ENCODE measurements at regions of chr7 and their contacts with region 1.

Region 1: DNA sequence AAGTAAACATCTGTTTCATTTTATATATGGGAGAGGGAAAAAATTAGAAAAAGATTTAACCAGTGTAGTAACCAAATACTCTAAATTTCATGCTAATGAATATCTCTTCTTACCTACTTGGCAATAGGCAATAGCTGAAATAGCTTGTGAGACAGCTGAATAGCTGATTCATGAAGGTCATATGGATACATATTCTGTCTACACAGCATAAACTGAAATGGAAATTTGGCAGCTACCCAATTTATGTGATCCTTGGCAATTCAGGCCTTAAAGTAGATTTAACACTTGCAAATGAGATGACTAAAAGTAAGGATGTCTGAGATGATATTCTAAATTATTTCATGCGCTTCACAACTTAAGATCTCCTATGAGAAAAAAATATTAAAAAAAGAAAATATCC is 261.2 kb upstream of the SEMA3A start:
- DNase-seq: peak; percentile 55
- H3K4me3 ChIP-seq: no peak overlapping the region
- H3K27ac ChIP-seq: no peak overlapping the region
- H3K4me1 ChIP-seq: no peaks in the 10 kb centered on the region
- H3K27me3 ChIP-seq: no peaks in the 10 kb centered on the region
- CTCF ChIP-seq: no peak
- POLR2A ChIP-seq: no peak

Region 2: GRCh38 chr7:84139986-84140729 is 315.6 kb before region 1 on chr7:
- CTCF ChIA-PET with region 1: no interaction called
- POLR2A ChIA-PET with region 1: no interaction called
- dilution Hi-C with region 1: no loop called
- intact Hi-C with region 1: no loop called
- DNase-seq: peak; percentile 55
- H3K4me3 ChIP-seq: no peak overlapping the region
- H3K27ac ChIP-seq: peak overlapping the region; percentile 20
- H3K4me1 ChIP-seq: peaks cover 14% of the 10 kb centered on the region
- H3K27me3 ChIP-seq: no peaks in the 10 kb centered on the region
- CTCF ChIP-seq: no peak
- POLR2A ChIP-seq: no peak

Region 3: GRCh38 chr7:84194543-84195271 is 261.1 kb before region 1 on chr7 and contains the start of gene SEMA3A:
- CTCF ChIA-PET with region 1: interaction called, 4 read pairs
- POLR2A ChIA-PET with region 1: no interaction called
- dilution Hi-C with region 1: no loop called
- intact Hi-C with region 1: loop called (anchors 10 kb)
- DNase-seq: peak; percentile 78
- H3K4me3 ChIP-seq: peak within 1 kb of the TSS; percentile 48 to 96 (median 92)
- H3K27ac ChIP-seq: peak within 1 kb of the TSS; percentile 24
- H3K4me1 ChIP-seq: peaks cover 11% of the 10 kb centered on the region
- H3K27me3 ChIP-seq: no peaks in the 10 kb centered on the region
- CTCF ChIP-seq: no peak
- POLR2A ChIP-seq: no peak
- total RNA-seq, gene SEMA3A: 1.2 and 1.7 TPM in 2 replicates

Region 4: DNA sequence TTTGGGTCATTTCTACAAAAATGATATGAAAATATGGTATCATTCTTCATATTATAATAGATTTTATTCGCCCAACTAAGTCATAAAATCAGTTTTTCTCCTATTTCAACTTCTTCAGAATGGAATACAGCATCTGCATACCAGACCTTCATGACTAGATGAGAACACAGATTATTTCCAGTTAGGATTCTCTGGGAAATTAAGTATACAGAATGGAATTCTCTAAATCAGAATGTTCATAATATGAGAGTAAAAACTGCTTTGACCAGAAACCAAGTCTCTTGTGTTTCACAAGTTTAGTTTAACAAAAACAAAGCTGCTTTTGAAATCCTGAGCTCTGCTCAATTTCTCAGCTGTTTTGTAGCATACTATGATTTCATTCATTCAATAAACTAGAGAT is 100.9 kb before region 1 on chr7:
- CTCF ChIA-PET with region 1: no interaction called
- POLR2A ChIA-PET with region 1: no interaction called
- dilution Hi-C with region 1: no loop called
- intact Hi-C with region 1: no loop called
- DNase-seq: no peak
- H3K4me3 ChIP-seq: no peak overlapping the region
- H3K27ac ChIP-seq: no peak overlapping the region
- H3K4me1 ChIP-seq: no peaks in the 10 kb centered on the region
- H3K27me3 ChIP-seq: no peaks in the 10 kb centered on the region
- CTCF ChIP-seq: no peak
- POLR2A ChIP-seq: no peak

Region 5: GRCh38 chr7:84529480-84530205 is 73.9 kb after region 1 on chr7:
- CTCF ChIA-PET with region 1: no interaction called
- POLR2A ChIA-PET with region 1: no interaction called
- dilution Hi-C with region 1: no loop called
- intact Hi-C with region 1: no loop called
- DNase-seq: peak; percentile 75
- H3K4me3 ChIP-seq: no peak overlapping the region
- H3K27ac ChIP-seq: peak overlapping the region; percentile 46
- H3K4me1 ChIP-seq: peaks cover 14% of the 10 kb centered on the region
- H3K27me3 ChIP-seq: no peaks in the 10 kb centered on the region
- CTCF ChIP-seq: no peak
- POLR2A ChIP-seq: no peak

Measured in endothelial cell of umbilical vein (primary cell).